Caco-2 (cell line): ENCODE measurements at regions of chr20 and their contacts with region 1.

Region 1: GRCh38 chr20:60210779-60211617 is 252.8 kb downstream of the CDH26 start:
- DNase-seq: peak; percentile 77 to 87
- H3K4me3 ChIP-seq: no peak overlapping the region
- H3K4me3 Mint-ChIP-seq: no peak overlapping the region
- H3K27ac Mint-ChIP-seq: no peak overlapping the region
- H3K4me1 ChIP-seq: no peaks in the 10 kb centered on the region
- H3K4me1 Mint-ChIP-seq: no peaks in the 10 kb centered on the region
- H3K27me3 ChIP-seq: no peaks in the 10 kb centered on the region; the same call in none of the 2 replicates
- H3K27me3 Mint-ChIP-seq: peaks cover 30% of the 10 kb centered on the region
- CTCF ChIP-seq: peak; percentile 99

Region 2: DNA sequence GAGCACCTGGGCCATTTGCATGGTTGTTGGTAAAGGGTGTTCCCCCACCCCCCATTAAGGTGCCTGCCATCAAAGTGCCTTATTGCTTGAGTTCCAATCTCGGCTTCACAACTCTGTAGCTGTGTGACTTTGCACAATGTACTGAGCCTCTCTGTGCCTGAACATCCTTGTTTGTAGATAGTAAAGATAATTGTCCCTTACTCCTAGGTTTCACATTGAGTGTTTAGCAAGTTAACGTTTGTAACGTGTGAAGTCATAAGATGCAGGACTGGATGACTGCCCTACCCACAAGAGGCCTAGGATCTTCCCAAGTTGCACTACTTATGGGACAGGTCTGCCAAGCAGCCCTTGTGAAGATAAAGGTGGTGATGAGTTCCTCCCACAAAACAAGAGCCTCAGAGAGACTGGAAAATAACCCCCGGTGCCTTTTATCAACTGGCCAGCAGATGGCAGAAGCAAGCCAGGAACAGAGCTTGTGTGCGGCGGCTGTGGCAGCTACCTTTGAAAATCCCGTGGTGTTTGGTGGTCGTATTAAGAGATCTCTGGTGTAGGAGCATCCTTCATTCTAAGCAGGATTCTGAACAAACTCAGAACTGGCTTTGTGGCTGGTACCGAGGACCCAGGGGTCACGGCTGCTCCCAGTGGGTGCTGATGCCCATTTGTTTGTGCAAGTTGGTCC is 153.7 kb before region 1 on chr20:
- CTCF ChIA-PET with region 1: interaction called, 4 read pairs
- POLR2A ChIA-PET with region 1: no interaction called
- intact Hi-C with region 1: loop called (anchors 2 kb)
- DNase-seq: peak; percentile 80 to 86
- H3K4me3 ChIP-seq: no peak overlapping the region
- H3K4me3 Mint-ChIP-seq: no peak overlapping the region
- H3K27ac Mint-ChIP-seq: no peak overlapping the region
- H3K4me1 ChIP-seq: peaks cover 8% of the 10 kb centered on the region
- H3K4me1 Mint-ChIP-seq: peaks cover 9% of the 10 kb centered on the region
- H3K27me3 ChIP-seq: no peaks in the 10 kb centered on the region
- H3K27me3 Mint-ChIP-seq: no peaks in the 10 kb centered on the region
- CTCF ChIP-seq: peak; percentile 97 to 98

Region 3: GRCh38 chr20:60233018-60233630 is 22.1 kb after region 1 on chr20:
- CTCF ChIA-PET with region 1: no interaction called
- POLR2A ChIA-PET with region 1: no interaction called
- intact Hi-C with region 1: no loop called
- DNase-seq: no peak
- H3K4me3 ChIP-seq: no peak overlapping the region
- H3K4me3 Mint-ChIP-seq: no peak overlapping the region
- H3K27ac Mint-ChIP-seq: no peak overlapping the region
- H3K4me1 ChIP-seq: no peaks in the 10 kb centered on the region
- H3K4me1 Mint-ChIP-seq: no peaks in the 10 kb centered on the region
- H3K27me3 ChIP-seq: peaks cover 1% of the 10 kb centered on the region
- H3K27me3 Mint-ChIP-seq: peaks cover 14% of the 10 kb centered on the region
- CTCF ChIP-seq: no peak

Region 4: GRCh38 chr20:60262967-60263603 is 52.1 kb after region 1 on chr20:
- CTCF ChIA-PET with region 1: interaction called, 7 read pairs
- POLR2A ChIA-PET with region 1: no interaction called
- intact Hi-C with region 1: loop called (anchors 1 kb)
- DNase-seq: peak; percentile 65 to 73
- H3K4me3 ChIP-seq: no peak overlapping the region
- H3K4me3 Mint-ChIP-seq: no peak overlapping the region
- H3K27ac Mint-ChIP-seq: no peak overlapping the region
- H3K4me1 ChIP-seq: no peaks in the 10 kb centered on the region
- H3K4me1 Mint-ChIP-seq: no peaks in the 10 kb centered on the region
- H3K27me3 ChIP-seq: no peaks in the 10 kb centered on the region
- H3K27me3 Mint-ChIP-seq: peaks cover 22% of the 10 kb centered on the region
- CTCF ChIP-seq: peak; percentile 78 to 86

Region 5: DNA sequence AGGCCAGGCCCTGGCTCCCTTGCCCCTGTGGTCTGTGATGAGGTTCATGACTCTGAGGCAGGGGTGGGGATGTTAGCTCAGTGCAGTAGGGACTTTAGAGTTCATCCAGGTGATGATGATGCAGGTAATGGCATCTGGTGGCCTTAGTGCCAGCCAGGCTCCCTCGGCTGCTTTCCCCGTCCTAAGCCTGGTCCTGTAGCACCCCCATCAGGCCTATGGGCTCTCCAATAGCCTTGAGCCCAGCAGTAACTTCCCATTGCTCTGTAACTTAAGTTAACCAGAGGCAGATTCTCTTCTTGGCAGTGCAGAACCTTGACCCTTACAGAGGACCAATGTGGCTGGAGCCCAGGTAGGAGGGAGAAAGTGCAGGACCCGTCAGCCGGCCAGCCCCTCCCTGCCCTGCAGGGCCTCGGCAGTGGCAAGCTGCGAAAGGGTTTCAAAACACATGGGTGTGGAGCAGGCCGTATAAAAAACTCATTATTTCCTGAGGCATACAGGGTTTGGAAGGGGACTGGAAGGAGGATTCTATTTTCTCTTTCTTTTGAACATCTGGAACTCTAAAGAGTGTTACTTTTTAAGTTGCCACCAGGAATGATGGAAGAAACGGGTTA is 154.2 kb after region 1 on chr20:
- CTCF ChIA-PET with region 1: no interaction called
- POLR2A ChIA-PET with region 1: no interaction called
- intact Hi-C with region 1: loop called (anchors 10 kb)
- DNase-seq: peak in 1 of 2 experiments; percentile 40
- H3K4me3 ChIP-seq: no peak overlapping the region
- H3K4me3 Mint-ChIP-seq: no peak overlapping the region
- H3K27ac Mint-ChIP-seq: no peak overlapping the region
- H3K4me1 ChIP-seq: no peaks in the 10 kb centered on the region
- H3K4me1 Mint-ChIP-seq: no peaks in the 10 kb centered on the region
- H3K27me3 ChIP-seq: no peaks in the 10 kb centered on the region; the same call in none of the 2 replicates
- H3K27me3 Mint-ChIP-seq: peaks cover 12% of the 10 kb centered on the region
- CTCF ChIP-seq: peak in 1 of 2 experiments; percentile 33

Region 6: DNA sequence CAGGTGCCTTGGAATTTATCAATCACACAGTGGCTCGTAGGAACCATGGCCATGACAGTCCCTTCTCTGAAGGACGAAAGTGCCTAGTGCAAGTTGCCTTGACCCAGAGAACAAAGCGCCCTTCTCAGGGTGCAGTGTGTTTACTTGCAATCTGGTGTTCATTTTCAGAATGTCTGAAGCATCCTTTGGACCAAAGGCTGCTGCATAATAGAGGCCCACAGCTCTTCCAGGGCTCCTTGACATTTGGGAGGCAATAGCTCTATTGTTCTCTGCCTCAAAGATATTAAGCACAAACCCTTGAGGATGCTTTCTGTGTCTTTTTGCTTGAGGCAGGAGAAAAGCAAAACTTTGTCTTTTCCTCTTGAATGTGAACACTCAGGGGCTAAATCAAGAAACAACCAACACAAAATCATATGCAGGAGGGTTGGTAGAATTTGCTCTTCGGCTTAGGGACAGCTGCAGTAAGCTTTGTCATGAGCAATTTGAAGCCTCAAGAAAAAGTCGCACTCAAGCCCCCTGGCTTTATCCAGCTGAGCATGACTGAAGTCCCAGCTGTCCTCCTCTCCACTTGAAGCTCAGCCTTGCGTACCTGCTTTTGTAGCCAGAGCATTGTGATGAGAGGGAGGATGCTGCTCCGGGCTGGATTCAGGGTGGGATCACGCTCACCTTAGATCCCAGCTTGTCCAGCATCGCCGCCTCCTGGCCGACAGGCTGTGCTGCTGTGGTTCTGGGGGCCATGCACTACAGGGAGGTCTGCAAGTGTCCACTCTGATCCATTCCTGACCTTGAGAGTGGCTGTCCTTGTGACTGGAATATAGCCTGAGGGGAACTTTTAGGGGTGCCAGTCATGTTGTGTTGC is 242.6 kb after region 1 on chr20:
- CTCF ChIA-PET with region 1: interaction called, 3 read pairs
- POLR2A ChIA-PET with region 1: no interaction called
- intact Hi-C with region 1: loop called (anchors 1 kb)
- DNase-seq: peak in 1 of 2 experiments; percentile 27
- H3K4me3 ChIP-seq: no peak overlapping the region
- H3K4me3 Mint-ChIP-seq: no peak overlapping the region
- H3K27ac Mint-ChIP-seq: no peak overlapping the region
- H3K4me1 ChIP-seq: no peaks in the 10 kb centered on the region
- H3K4me1 Mint-ChIP-seq: no peaks in the 10 kb centered on the region
- H3K27me3 ChIP-seq: no peaks in the 10 kb centered on the region
- H3K27me3 Mint-ChIP-seq: peaks cover 44% of the 10 kb centered on the region
- CTCF ChIP-seq: peak; percentile 22 to 49

Region 7: DNA sequence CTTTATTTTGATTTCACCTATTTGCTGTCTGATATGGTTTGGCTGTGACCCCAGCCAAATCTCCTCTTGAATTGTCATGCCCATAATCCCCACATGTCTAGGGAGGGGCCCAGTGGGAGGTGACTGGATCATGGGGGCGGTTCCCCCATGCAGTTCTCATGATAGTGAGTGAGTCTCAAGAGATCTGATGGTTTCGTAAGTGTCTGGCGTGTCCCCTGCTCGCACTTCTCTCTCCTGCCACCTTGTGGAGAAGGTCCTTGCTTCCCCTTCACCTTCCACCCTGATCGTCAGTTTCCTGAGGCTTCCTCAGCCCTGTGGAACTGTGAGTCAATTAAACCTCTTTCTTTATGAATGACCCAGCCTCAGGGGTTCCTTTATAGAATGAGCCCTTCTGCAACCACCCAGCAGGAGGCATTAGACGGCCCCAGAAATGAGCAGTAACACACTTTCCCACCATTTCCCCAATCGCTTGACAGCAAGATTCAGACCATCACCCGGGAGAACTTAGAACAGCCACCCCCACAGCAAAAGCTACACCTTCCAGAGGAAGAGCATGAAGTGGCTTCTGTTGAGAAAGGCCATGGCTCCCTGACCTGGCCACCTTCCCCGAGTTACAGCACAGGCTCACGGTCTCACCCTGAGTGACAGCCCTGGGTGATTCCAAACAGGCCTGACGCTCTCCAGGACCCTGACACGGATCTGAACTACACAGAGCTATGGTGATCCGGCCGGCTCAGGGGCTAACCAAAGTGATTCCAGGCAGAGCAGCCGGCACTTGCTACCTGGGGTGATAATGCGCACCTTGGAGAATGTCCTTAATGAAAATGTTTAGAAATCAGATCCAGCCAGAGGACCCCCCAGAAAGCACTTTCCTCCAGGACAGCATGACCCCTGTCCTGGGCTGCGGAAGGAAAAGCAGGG is 909.9 kb after region 1 on chr20:
- CTCF ChIA-PET with region 1: no interaction called
- POLR2A ChIA-PET with region 1: no interaction called
- intact Hi-C with region 1: loop called (anchors 1 kb)
- DNase-seq: peak; percentile 74 to 75
- H3K4me3 ChIP-seq: no peak overlapping the region
- H3K4me3 Mint-ChIP-seq: no peak overlapping the region
- H3K27ac Mint-ChIP-seq: no peak overlapping the region
- H3K4me1 ChIP-seq: no peaks in the 10 kb centered on the region; the same call in 1 of the 2 replicates
- H3K4me1 Mint-ChIP-seq: no peaks in the 10 kb centered on the region
- H3K27me3 ChIP-seq: no peaks in the 10 kb centered on the region
- H3K27me3 Mint-ChIP-seq: peaks cover 21% of the 10 kb centered on the region
- CTCF ChIP-seq: peak; percentile 50 to 58

Region 8: GRCh38 chr20:61896058-61896961 is 1685.3 kb after region 1 on chr20:
- CTCF ChIA-PET with region 1: no interaction called
- POLR2A ChIA-PET with region 1: no interaction called
- intact Hi-C with region 1: loop called (anchors 10 kb)
- DNase-seq: peak in 1 of 2 experiments; percentile 81
- H3K4me3 ChIP-seq: no peak overlapping the region
- H3K4me3 Mint-ChIP-seq: no peak overlapping the region
- H3K27ac Mint-ChIP-seq: no peak overlapping the region
- H3K4me1 ChIP-seq: no peaks in the 10 kb centered on the region
- H3K4me1 Mint-ChIP-seq: no peaks in the 10 kb centered on the region
- H3K27me3 ChIP-seq: peaks cover 12% of the 10 kb centered on the region
- H3K27me3 Mint-ChIP-seq: peaks cover 42% of the 10 kb centered on the region
- CTCF ChIP-seq: peak; percentile 98